Right lobe of liver (tissue), 6 donors: ENCODE measurements at regions of chr2 and their contacts with region 1.

Region 1: DNA sequence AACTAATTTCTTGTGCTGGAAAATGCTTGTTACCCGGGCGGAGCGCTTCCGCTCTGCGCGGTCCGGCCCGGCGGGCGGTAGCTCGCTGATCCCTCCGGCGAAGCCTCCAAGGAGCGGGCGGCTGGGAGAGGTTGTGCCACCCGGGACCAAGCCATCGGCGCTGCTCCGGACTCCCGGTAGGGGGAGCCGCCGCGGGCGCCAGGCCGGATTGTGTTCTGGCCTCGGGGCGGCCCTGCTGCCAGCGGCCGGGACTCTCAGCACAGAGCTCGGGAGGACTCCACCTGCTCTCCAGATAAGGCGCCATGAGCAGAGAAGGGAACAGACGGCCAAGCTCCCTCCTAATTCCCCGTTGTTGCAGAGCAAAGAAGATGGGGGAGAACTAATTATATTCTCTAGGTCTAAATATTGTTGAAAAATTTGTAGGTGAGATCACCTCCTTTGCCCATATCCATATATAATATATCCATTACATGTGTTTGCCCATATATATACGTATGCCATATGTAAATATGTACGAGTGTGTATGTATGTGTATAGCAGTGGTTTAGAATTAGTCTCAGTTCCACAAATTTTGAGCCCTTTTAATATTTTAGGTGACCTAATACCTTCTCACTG is 13.8 kb upstream of the SATB2 start:
- DNase-seq: peak; percentile 76 to 83 (median 83)
- ATAC-seq: peak; percentile 98 to 99 (median 98)
- H3K4me3 ChIP-seq: no peak overlapping the region
- H3K27ac ChIP-seq: no peak overlapping the region
- H3K4me1 ChIP-seq: peaks cover 0 to 9% (median 4%) of the 10 kb centered on the region in 4 donors
- H3K27me3 ChIP-seq: peaks cover 11 to 47% of the 10 kb centered on the region in 2 donors
- CTCF ChIP-seq: peak; percentile 66 to 84 (median 80)
- POLR2A ChIP-seq: no peak

Region 2: GRCh38 chr2:199596549-199596948 is 125.0 kb after region 1 on chr2:
- intact Hi-C with region 1: loop called in 1 of 2 experiments (anchors 10 kb)
- DNase-seq: no peak
- ATAC-seq: peak; percentile 83 to 84 (median 84)
- H3K4me3 ChIP-seq: no peak overlapping the region
- H3K27ac ChIP-seq: no peak overlapping the region
- H3K4me1 ChIP-seq: no peaks in the 10 kb centered on the region
- H3K27me3 ChIP-seq: no peaks in the 10 kb centered on the region
- CTCF ChIP-seq: peak; percentile 45 to 77 (median 69)
- POLR2A ChIP-seq: no peak

Region 3: GRCh38 chr2:199607914-199608313 is 136.4 kb after region 1 on chr2:
- intact Hi-C with region 1: no loop called
- DNase-seq: no peak
- ATAC-seq: no peak
- H3K4me3 ChIP-seq: no peak overlapping the region
- H3K27ac ChIP-seq: no peak overlapping the region
- H3K4me1 ChIP-seq: no peaks in the 10 kb centered on the region
- H3K27me3 ChIP-seq: no peaks in the 10 kb centered on the region
- CTCF ChIP-seq: no peak
- POLR2A ChIP-seq: no peak